HepG2 (cell line): ENCODE measurements at regions of chr3 and their contacts with region 1.

Region 1: DNA sequence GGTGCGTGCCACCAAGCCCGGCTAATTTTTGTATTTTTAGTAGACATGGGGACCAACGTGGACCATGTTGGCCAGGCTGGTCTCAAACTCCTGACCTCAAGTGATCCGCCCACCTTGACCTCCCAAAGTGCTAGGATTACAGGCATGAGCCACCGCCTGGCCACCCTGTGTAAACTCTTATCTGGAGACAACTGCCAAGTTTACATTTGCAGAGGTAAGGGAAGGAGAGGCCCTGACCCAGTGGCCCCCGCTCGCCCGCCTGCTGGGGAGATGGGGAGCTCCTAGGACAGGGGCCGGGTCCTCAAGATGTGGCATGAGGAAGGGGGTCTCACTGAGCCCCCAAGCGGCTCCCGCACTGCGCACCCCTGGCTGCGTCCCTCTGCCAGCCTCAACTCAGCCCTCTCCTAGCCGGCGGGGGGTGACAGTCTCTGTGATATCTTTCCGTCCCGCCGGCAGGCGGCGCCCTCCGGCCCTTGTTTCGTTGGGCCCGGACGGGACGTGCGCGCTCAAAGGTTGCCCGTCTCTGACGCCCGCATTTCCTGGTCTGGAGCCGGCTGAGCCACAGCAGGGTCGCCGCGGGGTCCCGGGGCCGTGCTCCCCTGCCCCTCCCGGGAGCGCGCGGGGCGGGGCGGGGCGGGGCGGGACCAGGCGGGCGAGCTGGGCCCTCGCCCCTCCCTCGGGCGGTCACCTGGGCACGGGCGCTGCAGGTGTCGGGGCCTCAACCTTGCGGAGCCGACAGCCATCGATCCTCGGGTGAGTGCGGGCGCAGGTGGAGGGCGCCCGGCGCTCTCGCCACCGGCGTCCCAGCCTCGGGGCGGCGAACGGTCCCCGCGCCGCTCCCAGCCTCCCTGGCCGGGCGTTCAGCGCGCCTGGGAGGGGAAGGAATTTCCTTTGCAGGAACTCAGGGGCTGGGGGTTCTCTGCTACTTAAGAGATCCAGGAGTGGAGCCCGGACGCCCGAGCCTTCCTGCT is at the start of gene GPR160:
- DNase-seq: peak; percentile 68
- ATAC-seq: peak; percentile 91
- H3K4me3 ChIP-seq: peak within 1 kb of the TSS; percentile 53 to 85 (median 80)
- H3K27ac ChIP-seq: peak within 1 kb of the TSS; percentile 34
- H3K4me1 ChIP-seq: no peaks in the 10 kb centered on the region
- H3K27me3 ChIP-seq: no peaks in the 10 kb centered on the region; a peak in 1 of 5 replicates
- CTCF ChIP-seq: peak; percentile 91
- EP300 ChIP-seq: peak in 1 of 2 experiments; percentile 43; a peak in 1 of 4 replicates
- POLR2A ChIP-seq: no peak; a peak in 1 of 4 replicates
- RAD21 ChIP-seq: peak; percentile 90
- total RNA-seq, gene GPR160: 12.1 and 14.0 TPM in 2 replicates

Region 2: GRCh38 chr3:170078620-170079281 is 41.0 kb after region 1 on chr3:
- CTCF ChIA-PET with region 1: interaction called, 3 read pairs
- POLR2A ChIA-PET with region 1: interaction called, 6 read pairs
- in situ Hi-C with region 1: no loop called
- intact Hi-C with region 1: loop called (anchors 2 kb)
- DNase-seq: peak; percentile 83
- ATAC-seq: peak; percentile 74
- H3K4me3 ChIP-seq: peak overlapping the region; percentile 30 to 51 (median 39)
- H3K27ac ChIP-seq: peak overlapping the region; percentile 85
- H3K4me1 ChIP-seq: peaks cover 64% of the 10 kb centered on the region
- H3K27me3 ChIP-seq: no peaks in the 10 kb centered on the region
- CTCF ChIP-seq: peak; percentile 63
- EP300 ChIP-seq: no peak
- POLR2A ChIP-seq: no peak
- RAD21 ChIP-seq: peak; percentile 28; the same call in 1 of the 2 replicates